ENCODE measurements at regions of chr1 and their contacts with region 1.

Region 1: GRCh38 chr1:211133836-211134669 is at the start of gene KCNH1:
- DNase-seq: no peak
- total RNA-seq, gene KCNH1: not detected

Region 2: DNA sequence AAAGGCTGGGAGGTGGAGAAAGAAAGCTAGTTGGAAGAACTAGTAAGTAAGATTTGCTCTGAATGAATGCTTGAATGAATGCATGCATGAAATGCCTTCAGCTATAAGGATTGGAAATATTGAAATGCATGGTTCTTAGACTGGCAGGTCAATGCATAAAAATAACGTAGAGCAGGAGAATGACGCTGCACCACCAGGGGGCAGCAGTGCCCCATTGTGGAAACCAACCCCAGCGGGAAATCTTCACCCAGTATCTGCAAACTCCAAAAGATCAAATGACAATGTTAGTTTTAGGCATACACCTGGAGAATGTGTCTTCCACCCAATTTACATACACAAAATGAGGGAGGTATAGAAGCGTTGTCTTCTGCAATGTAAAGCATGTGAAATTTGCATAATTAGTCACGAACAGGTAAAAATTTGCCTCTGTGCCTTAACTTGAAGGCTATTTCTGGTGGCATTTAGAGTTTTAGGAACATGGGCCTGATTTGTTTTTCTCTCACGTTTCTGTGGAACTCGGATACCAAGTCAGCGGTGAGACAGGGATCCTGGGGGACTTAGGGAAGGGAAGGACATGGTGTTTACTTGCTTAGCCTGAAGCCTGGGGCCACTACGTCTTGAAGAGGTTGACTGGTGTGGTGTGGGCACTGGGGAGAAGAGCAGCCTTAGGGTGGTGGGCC is 726.7 kb before region 1 on chr1:
- intact Hi-C with region 1: loop called (anchors 1 kb)
- DNase-seq: no peak

Region 3: DNA sequence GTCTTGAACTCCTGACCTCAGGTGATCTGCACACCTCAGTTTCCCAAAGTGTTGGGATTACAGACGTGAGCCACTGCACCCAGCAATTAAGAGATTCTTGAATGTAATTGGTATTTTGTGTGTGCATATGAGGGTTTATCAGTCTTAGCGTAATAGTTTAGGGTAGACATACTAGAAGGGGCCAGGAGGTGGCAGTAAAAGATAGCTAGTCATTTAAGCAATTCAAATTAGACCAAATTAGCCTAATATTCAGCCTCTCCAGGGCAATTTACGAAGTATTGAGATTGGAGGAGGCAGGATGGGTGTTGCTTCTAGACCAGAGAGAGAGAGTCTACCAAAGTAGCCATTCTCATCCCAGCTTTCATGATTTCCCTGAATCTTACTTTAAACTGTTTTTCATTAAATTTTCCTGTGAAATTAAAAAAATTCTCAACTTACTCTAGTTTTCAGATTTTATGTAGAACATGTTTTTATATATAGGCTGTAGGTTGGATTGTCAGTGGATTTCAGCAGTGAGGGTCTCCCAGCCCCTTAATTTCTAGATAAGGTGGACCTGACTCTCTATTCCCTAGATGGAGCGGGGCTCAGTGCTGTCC is 685.7 kb before region 1 on chr1:
- intact Hi-C with region 1: loop called (anchors 1 kb)
- DNase-seq: no peak

Measured in cardiac septum (tissue), 1 donor.